ENCODE measurements at regions of chr10 and their contacts with region 1.

Region 1: GRCh38 chr10:104300736-104301292 is 31.8 kb downstream of the GSTO2 start:
- DNase-seq: peak; percentile 99
- ATAC-seq: peak; percentile 57
- H3K4me3 ChIP-seq: no peak overlapping the region; the same call in 1 of the 2 replicates
- H3K27ac ChIP-seq: peak overlapping the region; percentile 89
- H3K4me1 ChIP-seq: peaks cover 31% of the 10 kb centered on the region
- H3K27me3 ChIP-seq: no peaks in the 10 kb centered on the region
- CTCF ChIP-seq: peak; percentile 29; the same call in 1 of the 2 replicates
- POLR2A ChIP-seq: peak; percentile 75
- RAD21 ChIP-seq: peak; percentile 39

Region 2: DNA sequence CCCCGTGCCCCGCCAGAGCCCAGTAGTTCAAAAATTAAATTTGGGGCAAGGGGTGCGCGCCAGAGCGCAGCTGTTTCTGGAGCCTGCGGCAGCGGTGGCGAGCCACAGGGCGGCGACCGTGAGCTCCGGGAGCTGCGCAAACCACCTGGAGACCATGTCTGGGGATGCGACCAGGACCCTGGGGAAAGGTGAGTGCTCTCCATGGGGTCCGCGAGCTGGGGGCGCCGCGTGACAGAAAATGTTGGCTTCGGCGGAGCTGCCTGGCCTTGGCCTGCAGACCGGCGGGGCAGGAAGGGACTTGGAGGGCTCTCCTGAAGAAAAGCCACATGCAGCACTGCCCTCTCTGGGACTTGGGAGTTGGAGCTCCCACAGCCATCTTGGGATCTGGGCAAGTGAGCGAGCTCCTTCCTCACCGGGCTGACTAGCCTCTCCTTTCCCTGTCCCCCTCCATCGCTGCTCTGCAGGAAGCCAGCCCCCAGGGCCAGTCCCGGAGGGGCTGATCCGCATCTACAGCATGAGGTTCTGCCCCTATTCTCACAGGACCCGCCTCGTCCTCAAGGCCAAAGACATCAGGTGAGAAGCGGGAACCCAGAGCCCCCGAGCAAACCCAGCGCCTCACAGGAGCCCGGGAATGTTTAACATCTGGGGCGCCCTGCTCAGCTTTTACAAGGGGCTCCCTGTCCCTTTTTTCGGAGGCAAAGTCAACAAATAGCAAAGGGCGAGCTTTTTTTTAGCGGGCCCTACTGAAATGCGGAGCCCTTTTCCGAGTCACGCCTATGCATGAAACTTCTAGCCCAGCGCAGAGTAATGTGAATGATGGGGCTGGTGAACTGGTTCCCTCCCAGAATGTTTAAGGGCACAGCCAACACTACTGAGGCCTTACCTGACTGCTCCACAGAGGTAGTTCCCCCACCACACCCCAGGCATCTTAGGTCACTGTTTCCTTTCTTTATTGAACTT is 25.8 kb before region 1 on chr10:
- CTCF ChIA-PET with region 1: interaction called, 14 read pairs
- POLR2A ChIA-PET with region 1: no interaction called
- dilution Hi-C with region 1: no loop called
- in situ Hi-C with region 1: no loop called
- intact Hi-C with region 1: no loop called
- DNase-seq: no peak
- ATAC-seq: peak; percentile 84
- H3K4me3 ChIP-seq: peak overlapping the region; percentile 29
- H3K27ac ChIP-seq: no peak overlapping the region
- H3K4me1 ChIP-seq: peaks cover 13% of the 10 kb centered on the region
- H3K27me3 ChIP-seq: no peaks in the 10 kb centered on the region
- CTCF ChIP-seq: peak; percentile 64
- POLR2A ChIP-seq: no peak
- RAD21 ChIP-seq: peak; percentile 49

Region 3: DNA sequence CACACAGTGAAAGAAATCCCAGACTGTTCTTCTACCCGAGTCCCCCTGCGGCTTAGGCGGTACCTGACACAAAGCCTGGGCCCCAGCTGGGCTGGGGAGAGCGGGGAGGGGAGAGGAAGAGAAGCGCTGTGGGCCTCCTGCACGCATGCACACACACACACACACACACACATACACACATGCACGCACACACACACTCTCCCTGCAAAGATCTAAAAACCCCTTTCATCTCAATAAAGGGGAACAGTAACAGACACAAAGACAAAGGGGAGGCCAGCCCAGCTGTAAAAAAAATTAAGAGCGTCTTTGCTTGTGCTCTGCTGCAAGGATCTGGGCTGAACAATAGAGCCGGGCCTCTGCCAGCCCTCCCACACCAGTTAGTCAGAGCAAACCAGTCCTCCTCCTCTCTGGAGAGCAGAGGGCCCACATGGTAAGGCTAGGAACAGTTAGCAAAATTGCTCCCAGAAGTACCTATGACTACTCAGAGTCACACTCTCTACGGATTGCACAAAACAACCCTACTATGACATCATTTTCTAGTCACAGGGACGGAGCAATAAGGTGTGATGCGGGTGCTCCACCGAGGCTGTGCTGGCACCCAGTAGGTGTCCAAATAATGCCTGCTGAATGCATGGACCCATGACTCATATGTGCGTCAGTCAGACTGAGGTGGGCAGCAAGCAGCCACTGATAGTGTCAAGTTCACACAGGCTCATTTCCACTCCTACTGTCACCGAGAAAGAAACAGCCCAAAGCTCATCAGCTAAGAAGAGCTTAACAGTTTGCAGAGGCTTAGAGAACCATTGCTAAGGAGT is 28.3 kb after region 1 on chr10:
- CTCF ChIA-PET with region 1: interaction called, 5 read pairs
- POLR2A ChIA-PET with region 1: no interaction called
- dilution Hi-C with region 1: no loop called
- in situ Hi-C with region 1: no loop called
- intact Hi-C with region 1: loop called (anchors 2 kb)
- DNase-seq: peak; percentile 97
- ATAC-seq: peak; percentile 50
- H3K4me3 ChIP-seq: no peak overlapping the region
- H3K27ac ChIP-seq: peak overlapping the region; percentile 76
- H3K4me1 ChIP-seq: peaks cover 63% of the 10 kb centered on the region
- H3K27me3 ChIP-seq: no peaks in the 10 kb centered on the region
- CTCF ChIP-seq: no peak
- POLR2A ChIP-seq: peak; percentile 73; the same call in 1 of the 2 replicates
- RAD21 ChIP-seq: 0 out of 2 replicates have a peak, but pooled peaks have one; percentile 2

Region 4: GRCh38 chr10:104337974-104338735 is 37.3 kb after region 1 on chr10 and contains the start of gene ITPRIP:
- CTCF ChIA-PET with region 1: interaction called, 7 read pairs
- POLR2A ChIA-PET with region 1: no interaction called
- dilution Hi-C with region 1: no loop called
- in situ Hi-C with region 1: no loop called
- intact Hi-C with region 1: loop called (anchors 1 kb)
- DNase-seq: peak; percentile 87
- ATAC-seq: peak; percentile 79
- H3K4me3 ChIP-seq: peak within 1 kb of the TSS; percentile 83
- H3K27ac ChIP-seq: peak within 1 kb of the TSS; percentile 98
- H3K4me1 ChIP-seq: peaks cover 31% of the 10 kb centered on the region
- H3K27me3 ChIP-seq: no peaks in the 10 kb centered on the region
- CTCF ChIP-seq: no peak; the same call in 1 of the 2 replicates
- POLR2A ChIP-seq: peak; percentile 97
- RAD21 ChIP-seq: no peak
- total RNA-seq, gene ITPRIP: 7.2 and 7.5 TPM in 2 replicates

Region 5: DNA sequence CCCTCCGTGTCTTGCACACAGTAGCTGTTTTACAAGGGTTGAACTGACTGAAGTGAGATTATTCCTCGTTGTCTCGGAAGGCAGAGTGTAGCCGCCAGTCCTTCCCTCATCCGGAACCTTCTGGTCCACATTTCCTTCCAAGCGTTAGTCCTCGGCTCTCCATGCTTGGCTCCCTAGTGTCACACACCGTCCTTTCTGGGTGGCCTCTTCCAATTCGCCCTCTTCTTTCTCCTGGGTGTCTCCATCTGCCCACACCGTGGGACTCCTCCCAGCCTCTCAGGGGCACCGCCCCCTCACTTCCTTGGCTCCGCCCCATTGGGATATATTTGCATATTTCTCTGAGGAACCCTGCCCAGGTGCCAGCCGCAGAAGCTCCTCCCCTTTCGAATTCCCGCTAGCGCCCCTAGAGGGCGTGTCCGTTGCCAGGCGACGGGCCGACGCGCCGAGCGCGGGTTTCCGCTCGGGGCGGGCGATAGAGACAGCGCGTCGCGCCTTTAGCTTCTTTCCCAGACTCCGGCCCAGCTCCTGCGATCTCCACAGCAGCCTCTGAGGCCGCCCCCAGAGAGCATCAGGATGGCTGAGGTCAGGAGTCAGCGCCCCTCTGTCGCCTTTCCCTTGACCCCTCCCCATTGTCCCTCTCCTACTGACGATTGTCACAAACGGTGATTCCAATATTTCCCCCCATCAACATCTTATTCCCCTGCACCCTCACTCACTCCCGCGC is 52.7 kb after region 1 on chr10 and contains the start of gene CFAP58:
- CTCF ChIA-PET with region 1: interaction called, 9 read pairs
- POLR2A ChIA-PET with region 1: no interaction called
- dilution Hi-C with region 1: no loop called
- in situ Hi-C with region 1: no loop called
- intact Hi-C with region 1: loop called (anchors 1 kb)
- DNase-seq: peak; percentile 70
- ATAC-seq: peak; percentile 87
- H3K4me3 ChIP-seq: peak within 1 kb of the TSS; percentile 53
- H3K27ac ChIP-seq: no peak within 1 kb of the TSS; the same call in 1 of the 2 replicates
- H3K4me1 ChIP-seq: peaks cover 7% of the 10 kb centered on the region; the same call in 1 of the 2 replicates
- H3K27me3 ChIP-seq: peaks cover 3% of the 10 kb centered on the region; the same call in 1 of the 2 replicates
- CTCF ChIP-seq: peak; percentile 67
- POLR2A ChIP-seq: no peak
- RAD21 ChIP-seq: no peak
- total RNA-seq, gene CFAP58: 0.36 and 0.83 TPM in 2 replicates

Region 6: DNA sequence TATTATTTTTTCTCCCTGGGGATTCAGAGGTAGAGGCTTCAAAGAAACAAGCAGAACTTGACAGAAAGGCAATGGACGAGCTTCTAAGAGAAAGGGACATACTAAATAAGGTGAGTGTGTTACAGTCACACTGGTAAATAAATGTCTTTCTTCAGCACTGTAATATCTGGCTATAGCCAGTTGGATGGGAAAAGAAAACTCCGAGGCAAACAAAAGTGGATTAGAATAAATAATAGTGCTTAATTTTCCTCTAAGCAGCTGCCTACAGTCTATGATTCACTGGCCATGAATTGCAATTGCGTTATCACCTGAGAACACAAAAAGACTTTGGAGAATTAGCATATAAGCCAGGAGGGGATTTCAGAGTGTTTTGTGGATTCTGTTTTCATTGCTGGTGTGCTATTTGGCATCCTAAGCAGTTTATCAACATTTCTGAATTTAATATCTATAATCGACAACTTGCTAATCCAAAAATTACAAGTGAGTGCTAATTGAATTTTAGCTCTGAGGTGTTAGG is 76.0 kb after region 1 on chr10:
- CTCF ChIA-PET with region 1: no interaction called
- POLR2A ChIA-PET with region 1: no interaction called
- dilution Hi-C with region 1: no loop called
- in situ Hi-C with region 1: no loop called
- intact Hi-C with region 1: no loop called
- DNase-seq: no peak
- ATAC-seq: no peak
- H3K4me3 ChIP-seq: no peak overlapping the region
- H3K27ac ChIP-seq: no peak overlapping the region
- H3K4me1 ChIP-seq: no peaks in the 10 kb centered on the region
- H3K27me3 ChIP-seq: no peaks in the 10 kb centered on the region
- CTCF ChIP-seq: no peak
- POLR2A ChIP-seq: no peak
- RAD21 ChIP-seq: no peak

Region 7: DNA sequence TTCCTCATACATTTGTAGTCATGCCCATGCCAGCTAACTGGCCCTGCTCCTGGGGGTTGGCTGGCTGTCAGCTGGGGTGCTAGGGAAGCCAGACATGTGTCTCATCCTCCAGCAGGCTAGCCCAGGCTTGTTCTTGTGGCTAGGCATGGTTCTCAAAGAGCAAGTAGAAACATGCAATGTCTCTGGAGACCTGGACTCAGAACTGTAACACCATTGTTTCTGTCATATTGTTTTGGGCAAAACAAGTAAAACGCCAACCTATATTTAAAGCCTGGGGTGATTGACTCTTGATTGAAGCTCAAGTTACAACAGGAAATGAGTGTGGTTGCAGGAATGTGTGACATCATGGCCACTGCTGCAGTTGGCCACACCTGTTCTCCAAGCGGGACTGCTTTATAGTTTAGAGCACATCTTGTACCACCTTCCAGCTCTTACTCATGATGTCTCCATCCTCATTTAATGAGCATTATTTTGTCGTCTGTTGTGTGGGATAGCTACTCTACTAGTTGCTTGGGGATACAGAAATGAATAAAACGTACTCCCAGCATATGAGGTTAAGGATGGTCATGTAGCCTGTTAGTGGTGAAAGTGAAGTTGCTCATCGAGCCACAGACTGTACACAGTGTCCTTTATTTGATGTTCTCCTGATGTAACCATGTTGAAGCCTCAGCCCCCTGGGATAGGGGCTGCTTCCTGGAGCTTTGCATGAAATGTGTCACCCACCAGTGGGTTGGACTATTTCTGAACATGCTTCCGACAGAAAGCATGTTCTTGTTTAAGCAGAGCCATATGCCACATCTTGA is 508.7 kb after region 1 on chr10:
- CTCF ChIA-PET with region 1: no interaction called
- POLR2A ChIA-PET with region 1: no interaction called
- dilution Hi-C with region 1: no loop called
- in situ Hi-C with region 1: no loop called
- intact Hi-C with region 1: no loop called
- DNase-seq: no peak
- ATAC-seq: no peak
- H3K4me3 ChIP-seq: no peak overlapping the region
- H3K27ac ChIP-seq: no peak overlapping the region
- H3K4me1 ChIP-seq: no peaks in the 10 kb centered on the region
- H3K27me3 ChIP-seq: no peaks in the 10 kb centered on the region
- CTCF ChIP-seq: no peak
- POLR2A ChIP-seq: no peak
- RAD21 ChIP-seq: no peak